GM10248 (cell line): ENCODE measurements at regions of chr5 and their contacts with region 1.

Region 1: GRCh38 chr5:171261361-171261760 is 47.7 kb upstream of the TLX3 start:
- DNase-seq: no peak
- CTCF ChIP-seq: no peak

Region 2: DNA sequence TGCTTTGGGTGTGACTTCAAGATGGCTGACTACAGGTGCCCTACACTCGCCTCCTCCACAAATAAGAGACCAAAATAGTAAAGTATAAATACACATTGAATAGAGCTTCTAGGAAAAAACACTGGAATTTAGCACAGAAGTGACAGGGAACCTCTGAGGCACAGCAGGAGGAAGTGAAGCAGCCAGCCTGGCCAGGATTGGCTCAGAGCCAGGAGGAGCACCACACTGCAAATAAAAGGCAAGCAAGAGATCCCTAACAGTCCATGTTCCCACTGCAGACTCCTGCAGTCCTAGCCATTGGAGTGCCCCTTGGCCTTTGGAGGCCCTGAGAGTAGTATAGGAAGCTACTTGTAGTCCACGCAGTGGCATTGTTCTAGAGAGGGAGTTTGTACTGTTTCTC is 139.0 kb before region 1 on chr5:
- CTCF ChIA-PET with region 1: no interaction called
- POLR2A ChIA-PET with region 1: no interaction called
- DNase-seq: no peak
- CTCF ChIP-seq: no peak

Region 3: GRCh38 chr5:171272996-171273970 is 11.9 kb after region 1 on chr5:
- CTCF ChIA-PET with region 1: interaction called, 16 read pairs
- POLR2A ChIA-PET with region 1: no interaction called
- DNase-seq: peak; percentile 20
- CTCF ChIP-seq: peak; percentile 35

Region 4: GRCh38 chr5:171306166-171306565 is 44.8 kb after region 1 on chr5:
- CTCF ChIA-PET with region 1: no interaction called
- POLR2A ChIA-PET with region 1: no interaction called
- DNase-seq: no peak
- CTCF ChIP-seq: no peak

Region 5: GRCh38 chr5:171494452-171495121 is 233.2 kb after region 1 on chr5:
- CTCF ChIA-PET with region 1: no interaction called
- POLR2A ChIA-PET with region 1: no interaction called
- DNase-seq: no peak
- CTCF ChIP-seq: no peak